Activated CD4-positive, alpha-beta memory T cell treated with anti-CD3 and anti-CD28 coated beads for 36 hours (primary cell): ENCODE measurements at regions of chr10 and their contacts with region 1.

Region 1: DNA sequence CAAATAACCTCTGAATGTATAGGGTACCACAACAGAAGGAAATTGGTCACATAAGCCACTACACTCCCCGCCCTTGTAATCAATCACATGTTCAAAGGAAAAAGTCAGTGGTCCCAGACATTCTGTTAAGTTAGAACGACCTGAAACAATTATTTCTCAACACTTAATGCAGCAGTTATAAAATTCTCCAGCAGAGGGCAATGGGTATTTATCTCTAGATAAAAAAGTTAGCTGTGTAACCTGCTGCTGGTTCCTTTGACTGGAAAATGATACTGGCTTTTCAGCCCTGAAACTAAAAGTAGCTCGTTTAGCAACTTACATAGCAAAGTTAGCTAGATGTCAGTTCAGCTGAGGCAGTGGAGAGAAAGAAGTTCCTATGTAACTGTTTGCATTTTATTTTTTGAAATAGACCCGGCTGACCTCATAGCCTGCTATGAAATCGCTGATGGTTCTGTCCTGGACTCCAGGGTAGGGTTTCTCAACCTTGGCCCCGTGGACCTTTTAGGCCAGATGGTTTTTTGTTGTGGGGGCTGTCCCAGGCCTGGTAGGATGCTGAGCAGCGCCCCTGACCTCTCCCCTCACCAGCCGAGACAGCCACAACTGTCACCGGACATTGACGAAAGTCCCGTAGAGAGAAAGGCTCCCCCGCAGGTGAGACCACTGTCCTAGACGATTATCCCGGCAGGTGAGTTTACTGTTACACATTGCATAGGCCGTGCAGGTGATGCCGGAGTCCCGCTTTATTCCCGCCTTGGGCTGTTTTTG is 40.2 kb upstream of the PROSER2 start:
- DNase-seq: no peak
- H3K4me3 Mint-ChIP-seq: no peak overlapping the region
- H3K27ac Mint-ChIP-seq: no peak overlapping the region
- H3K4me1 Mint-ChIP-seq: no peaks in the 10 kb centered on the region
- H3K27me3 Mint-ChIP-seq: peaks cover 7% of the 10 kb centered on the region

Region 2: GRCh38 chr10:11772575-11773288 is 10.2 kb before region 1 on chr10:
- CTCF ChIA-PET with region 1: interaction called, 13 read pairs
- POLR2A ChIA-PET with region 1: no interaction called
- intact Hi-C with region 1: no loop called
- DNase-seq: no peak
- H3K4me3 Mint-ChIP-seq: no peak overlapping the region
- H3K27ac Mint-ChIP-seq: no peak overlapping the region
- H3K4me1 Mint-ChIP-seq: no peaks in the 10 kb centered on the region
- H3K27me3 Mint-ChIP-seq: peaks cover 9% of the 10 kb centered on the region

Region 3: DNA sequence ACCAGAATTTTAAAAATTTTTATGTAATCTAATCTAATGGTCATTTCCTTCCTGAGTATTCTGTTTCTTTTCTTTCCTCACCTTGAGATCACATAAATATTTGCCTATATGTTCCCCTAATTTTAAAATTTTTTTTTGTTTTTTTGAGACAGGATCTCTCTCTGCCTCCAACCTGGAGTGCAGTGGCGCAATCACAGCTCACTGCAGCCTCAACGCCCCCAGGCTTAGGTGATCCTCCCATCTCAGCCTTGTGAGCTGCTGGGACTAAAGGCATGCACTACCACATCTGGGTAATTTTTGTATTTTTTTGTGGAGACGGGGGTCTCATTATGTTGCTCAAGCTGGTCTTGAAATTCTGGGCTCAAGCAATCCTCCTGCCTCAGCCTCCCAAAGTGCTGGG is 36.1 kb after region 1 on chr10:
- CTCF ChIA-PET with region 1: interaction called, 29 read pairs
- POLR2A ChIA-PET with region 1: no interaction called
- intact Hi-C with region 1: loop called (anchors 2 kb)
- DNase-seq: no peak
- H3K4me3 Mint-ChIP-seq: no peak overlapping the region
- H3K27ac Mint-ChIP-seq: no peak overlapping the region
- H3K4me1 Mint-ChIP-seq: peaks cover 6% of the 10 kb centered on the region
- H3K27me3 Mint-ChIP-seq: peaks cover 20% of the 10 kb centered on the region

Region 4: DNA sequence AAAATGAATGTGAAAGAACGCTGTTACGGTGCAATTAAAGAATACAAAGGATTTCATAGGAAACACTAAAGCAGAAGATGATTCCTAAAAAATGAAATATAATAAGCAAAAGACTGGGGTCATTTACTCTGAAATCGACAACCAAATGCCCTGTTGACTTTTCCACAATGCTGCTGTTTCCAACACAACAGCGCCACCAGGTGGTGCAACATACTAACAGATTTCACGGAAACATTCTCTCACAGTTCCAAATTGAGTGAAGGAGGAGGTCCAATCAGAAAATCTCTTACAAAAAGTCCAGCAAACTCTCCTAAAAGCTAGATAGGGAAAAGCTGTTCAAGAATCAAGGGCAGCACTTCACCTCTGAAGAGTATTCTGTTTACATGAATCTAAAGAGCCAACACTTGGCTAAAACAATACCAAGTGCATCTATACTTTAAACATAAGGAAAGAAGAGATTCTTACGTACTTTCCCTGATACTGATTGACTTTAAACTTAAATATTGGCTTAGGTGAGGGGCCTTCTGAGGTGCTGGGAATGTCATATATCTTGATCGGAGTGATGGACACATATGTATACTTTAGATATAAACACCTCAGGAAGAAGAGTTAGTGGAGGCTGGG is 203.7 kb after region 1 on chr10:
- CTCF ChIA-PET with region 1: interaction called, 18 read pairs
- POLR2A ChIA-PET with region 1: no interaction called
- intact Hi-C with region 1: loop called (anchors 1 kb)
- DNase-seq: peak; percentile 81
- H3K4me3 Mint-ChIP-seq: no peak overlapping the region
- H3K27ac Mint-ChIP-seq: no peak overlapping the region
- H3K4me1 Mint-ChIP-seq: peaks cover 4% of the 10 kb centered on the region
- H3K27me3 Mint-ChIP-seq: no peaks in the 10 kb centered on the region